ENCODE measurements at regions of chr16 and their contacts with region 1.

Region 1: DNA sequence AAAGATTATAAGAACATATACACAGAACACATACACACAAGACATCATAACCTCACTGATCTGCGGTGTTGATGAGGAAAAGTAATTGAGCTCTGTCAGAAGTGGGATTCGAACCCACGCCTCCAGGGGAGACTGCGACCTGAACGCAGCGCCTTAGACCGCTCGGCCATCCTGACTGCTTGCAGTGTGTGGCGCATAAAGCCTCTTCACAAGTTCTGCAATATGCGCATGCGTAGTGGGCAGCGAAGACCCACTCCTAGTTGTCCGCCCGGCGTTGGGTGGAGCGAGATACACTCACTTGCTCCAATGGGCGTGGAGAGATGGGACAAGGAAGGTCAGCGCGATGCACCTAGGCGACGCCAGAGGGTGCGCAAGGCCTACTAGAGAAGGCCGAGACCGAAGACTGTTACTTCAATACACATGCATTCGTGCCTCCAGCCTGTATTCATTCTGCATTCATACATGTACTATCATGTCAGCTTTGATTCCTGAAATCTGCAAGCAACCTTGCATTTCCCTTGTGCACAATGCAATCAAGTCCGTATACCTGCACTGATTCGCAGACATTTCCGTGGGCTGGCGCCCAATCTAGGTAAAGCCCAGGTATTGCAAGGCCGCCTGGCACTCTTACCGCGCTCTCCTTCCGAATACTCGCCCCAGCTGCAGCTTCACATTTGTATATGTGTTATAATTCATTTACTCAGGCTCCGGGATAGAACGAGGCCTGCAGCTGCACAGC is 16.1 kb upstream of the PLLP start:
- DNase-seq: peak; percentile 97
- ATAC-seq: peak; percentile 78
- H3K4me3 ChIP-seq: peak overlapping the region; percentile 85
- H3K27ac ChIP-seq: peak overlapping the region; percentile 28; the same call in 1 of the 2 replicates
- H3K4me1 ChIP-seq: peaks cover 18% of the 10 kb centered on the region
- H3K27me3 ChIP-seq: no peaks in the 10 kb centered on the region
- CTCF ChIP-seq: peak; percentile 86

Region 2: DNA sequence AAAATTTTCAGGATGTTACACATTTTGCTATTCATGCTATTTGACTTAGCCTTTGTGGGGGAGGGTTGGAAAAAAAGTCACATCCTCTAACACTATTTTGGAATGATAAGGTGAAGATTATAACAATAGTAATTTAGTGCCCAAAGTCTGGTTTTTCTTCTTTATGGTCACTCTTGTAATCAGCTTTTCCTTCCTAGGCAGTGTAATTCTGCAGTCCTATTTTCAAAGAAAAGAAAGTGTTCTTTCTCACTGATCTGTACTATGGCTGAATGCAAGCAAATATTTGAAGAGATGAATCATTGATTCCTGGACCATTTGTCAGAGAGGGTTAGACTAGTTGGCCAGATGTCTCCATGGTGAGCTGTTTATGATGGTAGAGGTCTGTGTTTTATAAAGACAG is 106.0 kb before region 1 on chr16:
- CTCF ChIA-PET with region 1: no interaction called
- POLR2A ChIA-PET with region 1: no interaction called
- intact Hi-C with region 1: loop called (anchors 5 kb)
- DNase-seq: peak; percentile 90
- ATAC-seq: peak; percentile 93
- H3K4me3 ChIP-seq: peak overlapping the region; percentile 32; the same call in 1 of the 2 replicates
- H3K27ac ChIP-seq: peak overlapping the region; percentile 87
- H3K4me1 ChIP-seq: peaks cover 56% of the 10 kb centered on the region
- H3K27me3 ChIP-seq: no peaks in the 10 kb centered on the region
- CTCF ChIP-seq: no peak

Region 3: DNA sequence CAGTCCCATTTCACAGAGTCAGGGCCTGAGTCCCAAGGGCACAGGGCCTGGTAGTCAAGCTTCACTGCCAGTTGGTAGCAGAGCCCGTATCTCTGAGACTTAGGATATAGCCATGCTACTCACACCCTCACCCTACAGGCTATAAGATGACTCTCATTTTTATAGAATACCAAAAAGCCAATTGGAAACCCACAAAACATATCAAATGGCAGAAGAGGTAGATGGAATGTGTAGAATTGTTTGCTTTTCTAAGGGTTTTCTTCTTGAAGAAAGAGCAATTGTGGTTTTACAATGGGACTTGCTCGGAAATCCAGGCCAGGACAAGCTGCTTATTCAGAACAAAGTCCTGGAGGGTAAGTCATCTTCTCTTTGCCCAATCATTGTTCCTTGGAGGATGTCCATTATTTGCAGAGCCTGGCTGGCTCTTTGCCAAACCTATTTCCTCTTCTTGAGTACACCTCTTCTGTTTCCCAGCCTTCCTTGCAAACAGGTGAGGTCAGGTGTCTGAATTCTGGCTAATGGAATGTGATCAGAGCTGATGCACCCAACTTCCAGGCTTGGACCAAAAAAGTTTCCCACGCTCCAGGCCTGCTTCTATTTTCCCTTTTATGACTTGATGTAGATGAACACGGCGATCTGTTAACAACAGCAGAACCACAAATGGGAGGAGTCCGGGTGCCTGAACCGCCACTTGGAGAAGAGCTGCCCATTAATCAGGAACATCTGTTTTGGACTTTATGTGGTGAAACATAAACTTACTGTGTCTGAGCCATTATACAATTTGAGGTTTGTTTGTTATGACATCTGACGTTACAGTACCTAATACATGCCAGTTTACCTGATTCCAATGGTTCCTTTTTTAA is 41.1 kb after region 1 on chr16:
- CTCF ChIA-PET with region 1: no interaction called
- POLR2A ChIA-PET with region 1: no interaction called
- intact Hi-C with region 1: loop called (anchors 1 kb)
- DNase-seq: peak; percentile 99
- ATAC-seq: peak; percentile 90
- H3K4me3 ChIP-seq: no peak overlapping the region
- H3K27ac ChIP-seq: peak overlapping the region; percentile 94
- H3K4me1 ChIP-seq: peaks cover 33% of the 10 kb centered on the region
- H3K27me3 ChIP-seq: no peaks in the 10 kb centered on the region
- CTCF ChIP-seq: no peak; the same call in 1 of the 2 replicates

Region 4: GRCh38 chr16:57358527-57359095 is 58.1 kb after region 1 on chr16 and contains the start of gene CCL22:
- CTCF ChIA-PET with region 1: no interaction called
- POLR2A ChIA-PET with region 1: no interaction called
- intact Hi-C with region 1: no loop called
- DNase-seq: peak; percentile 41
- ATAC-seq: peak; percentile 54
- H3K4me3 ChIP-seq: no peak within 1 kb of the TSS
- H3K27ac ChIP-seq: no peak within 1 kb of the TSS
- H3K4me1 ChIP-seq: 0 out of 2 replicates have a peak, but pooled peaks cover 5% of the 10 kb centered on the region
- H3K27me3 ChIP-seq: no peaks in the 10 kb centered on the region
- CTCF ChIP-seq: no peak
- total RNA-seq, gene CCL22: not detected in 2 replicates

Region 5: DNA sequence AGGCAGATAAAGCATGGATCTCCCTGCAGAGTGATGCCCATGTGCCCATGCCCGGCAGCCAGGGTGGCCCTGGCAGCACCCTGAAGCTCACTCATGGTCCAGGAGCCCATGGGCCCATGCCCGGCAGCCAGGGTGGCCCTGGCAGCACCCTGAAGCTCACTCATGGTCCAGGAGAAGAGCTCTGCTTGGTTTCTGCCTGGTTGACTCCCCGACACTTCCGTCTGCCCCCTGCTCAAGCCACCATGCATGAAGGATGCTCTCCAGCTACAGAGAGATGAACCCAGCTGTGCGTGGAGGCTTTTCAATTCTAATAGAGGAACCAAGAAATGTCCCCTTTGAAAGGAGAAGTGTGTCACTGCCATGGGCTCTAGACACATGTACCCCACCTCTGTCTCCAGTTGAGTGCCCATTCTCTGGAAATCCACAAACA is 112.8 kb after region 1 on chr16:
- CTCF ChIA-PET with region 1: interaction called, 12 read pairs
- POLR2A ChIA-PET with region 1: interaction called, 19 read pairs
- intact Hi-C with region 1: loop called (anchors 1 kb)
- DNase-seq: no peak
- ATAC-seq: no peak
- H3K4me3 ChIP-seq: no peak overlapping the region
- H3K27ac ChIP-seq: no peak overlapping the region
- H3K4me1 ChIP-seq: peaks cover 12% of the 10 kb centered on the region
- H3K27me3 ChIP-seq: no peaks in the 10 kb centered on the region
- CTCF ChIP-seq: no peak